CD8-positive, alpha-beta memory T cell (primary cell): ENCODE measurements at regions of chr6 and their contacts with region 1.

Region 1: DNA sequence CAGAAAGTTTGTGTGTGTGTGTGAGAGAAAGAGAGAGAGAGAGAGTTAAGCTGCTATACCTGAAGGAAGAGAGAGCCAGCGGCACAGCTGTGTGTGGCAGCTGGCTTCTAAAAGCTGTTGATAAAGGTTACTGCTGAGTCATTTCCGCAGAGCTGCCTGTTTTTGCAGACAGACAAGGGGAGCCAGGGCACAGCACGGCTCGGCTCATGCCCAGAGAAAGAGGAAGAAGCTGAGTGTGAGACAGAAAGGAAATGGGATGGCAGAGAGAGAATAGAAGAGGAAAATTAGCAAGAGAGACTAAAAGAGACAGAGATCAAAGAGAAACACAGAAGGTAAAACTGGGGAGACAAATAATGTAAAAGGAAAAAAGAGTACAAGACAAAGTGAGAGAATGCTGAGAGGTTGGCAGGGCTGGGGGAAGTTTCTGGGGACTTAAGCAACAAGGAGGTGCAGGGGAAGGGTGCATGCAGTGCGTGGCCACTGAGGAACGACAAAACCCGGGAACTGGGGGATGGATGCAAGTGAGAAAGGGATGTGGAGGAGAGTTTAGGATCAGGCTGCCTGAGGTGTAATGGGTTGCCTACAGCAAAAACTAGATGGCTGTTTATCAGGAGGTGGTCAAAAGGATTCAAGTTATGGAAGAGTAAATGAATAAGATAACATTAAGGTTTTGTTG is 22.7 kb downstream of the HLA-A start:
- DNase-seq: peak; percentile 67 to 89 (median 80)
- H3K4me3 ChIP-seq: peak overlapping the region; percentile 69
- H3K4me3 Mint-ChIP-seq: peak overlapping the region; percentile 85 to 90 (median 87)
- H3K27ac ChIP-seq: peak overlapping the region; percentile 89
- H3K27ac Mint-ChIP-seq: peak overlapping the region; percentile 85 to 98 (median 93)
- H3K4me1 ChIP-seq: peaks cover 32% of the 10 kb centered on the region
- H3K4me1 Mint-ChIP-seq: peaks cover 43 to 50% (median 47%) of the 10 kb centered on the region in 3 donors
- H3K27me3 ChIP-seq: no peaks in the 10 kb centered on the region
- H3K27me3 Mint-ChIP-seq: no peaks in the 10 kb centered on the region

Region 2: DNA sequence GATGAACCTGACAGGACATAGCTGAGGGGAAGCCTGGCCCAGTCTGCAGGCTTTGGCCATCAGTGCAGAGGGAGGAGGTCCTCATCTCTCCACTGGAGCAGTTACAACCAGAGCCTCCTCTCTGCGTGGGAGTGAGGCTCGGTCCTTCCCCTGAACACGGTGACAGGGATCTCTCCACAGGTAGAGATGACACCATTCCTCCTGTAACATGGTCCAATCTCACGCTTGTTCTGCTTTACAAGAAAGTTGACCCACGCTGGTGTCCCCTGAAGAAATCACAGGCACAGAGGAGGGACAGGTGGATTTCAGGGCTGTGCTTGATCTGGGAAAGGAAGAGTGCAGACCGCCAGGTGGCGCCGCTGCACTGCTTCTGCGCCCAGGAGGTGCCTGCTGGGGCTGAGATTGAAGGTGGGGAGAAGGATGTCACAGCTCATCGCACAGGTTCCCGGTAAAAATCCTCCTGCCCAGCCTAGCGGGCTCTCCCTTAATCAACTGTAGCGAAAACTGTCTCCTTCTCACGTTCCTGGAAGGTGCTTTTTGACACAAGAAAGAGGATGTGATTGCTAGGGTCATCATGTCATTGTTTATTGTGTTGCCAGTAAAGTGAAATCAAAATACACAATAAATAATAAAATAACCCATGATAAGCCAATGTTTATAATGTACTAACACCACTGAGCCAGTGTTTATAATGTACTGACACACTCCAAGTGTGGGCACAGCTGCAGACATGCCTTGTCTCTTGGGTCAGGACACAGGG is 117.0 kb before region 1 on chr6:
- CTCF ChIA-PET with region 1: interaction called, 39 read pairs
- POLR2A ChIA-PET with region 1: interaction called, 6 read pairs
- DNase-seq: peak; percentile 71 to 88 (median 79)
- H3K4me3 ChIP-seq: no peak overlapping the region
- H3K4me3 Mint-ChIP-seq: peak overlapping the region in 5 of 7 donors; percentile 15 to 45 (median 37)
- H3K27ac ChIP-seq: no peak overlapping the region
- H3K27ac Mint-ChIP-seq: peak overlapping the region in 1 of 8 donors; percentile 40
- H3K4me1 ChIP-seq: no peaks in the 10 kb centered on the region
- H3K4me1 Mint-ChIP-seq: peaks cover 10 to 18% (median 13%) of the 10 kb centered on the region in 3 donors
- H3K27me3 ChIP-seq: peaks cover 33% of the 10 kb centered on the region
- H3K27me3 Mint-ChIP-seq: peaks cover 52 to 72% of the 10 kb centered on the region in 2 donors

Region 3: GRCh38 chr6:29942275-29943052 is 22.6 kb before region 1 on chr6 and contains the start of gene HLA-A:
- CTCF ChIA-PET with region 1: interaction called, 11 read pairs
- POLR2A ChIA-PET with region 1: interaction called, 36 read pairs
- DNase-seq: peak; percentile 89 to 97 (median 93)
- H3K4me3 ChIP-seq: peak within 1 kb of the TSS; percentile 91
- H3K4me3 Mint-ChIP-seq: peak within 1 kb of the TSS; percentile 87 to 99 (median 97)
- H3K27ac ChIP-seq: peak within 1 kb of the TSS; percentile 94
- H3K27ac Mint-ChIP-seq: peak within 1 kb of the TSS; percentile 98 to 100 (median 100)
- H3K4me1 ChIP-seq: peaks cover 39% of the 10 kb centered on the region
- H3K4me1 Mint-ChIP-seq: peaks cover 53 to 60% (median 55%) of the 10 kb centered on the region in 3 donors
- H3K27me3 ChIP-seq: no peaks in the 10 kb centered on the region
- H3K27me3 Mint-ChIP-seq: peaks cover 0 to 16% of the 10 kb centered on the region in 2 donors
- total RNA-seq, gene HLA-A: 1,371 to 1,390 TPM

Region 4: DNA sequence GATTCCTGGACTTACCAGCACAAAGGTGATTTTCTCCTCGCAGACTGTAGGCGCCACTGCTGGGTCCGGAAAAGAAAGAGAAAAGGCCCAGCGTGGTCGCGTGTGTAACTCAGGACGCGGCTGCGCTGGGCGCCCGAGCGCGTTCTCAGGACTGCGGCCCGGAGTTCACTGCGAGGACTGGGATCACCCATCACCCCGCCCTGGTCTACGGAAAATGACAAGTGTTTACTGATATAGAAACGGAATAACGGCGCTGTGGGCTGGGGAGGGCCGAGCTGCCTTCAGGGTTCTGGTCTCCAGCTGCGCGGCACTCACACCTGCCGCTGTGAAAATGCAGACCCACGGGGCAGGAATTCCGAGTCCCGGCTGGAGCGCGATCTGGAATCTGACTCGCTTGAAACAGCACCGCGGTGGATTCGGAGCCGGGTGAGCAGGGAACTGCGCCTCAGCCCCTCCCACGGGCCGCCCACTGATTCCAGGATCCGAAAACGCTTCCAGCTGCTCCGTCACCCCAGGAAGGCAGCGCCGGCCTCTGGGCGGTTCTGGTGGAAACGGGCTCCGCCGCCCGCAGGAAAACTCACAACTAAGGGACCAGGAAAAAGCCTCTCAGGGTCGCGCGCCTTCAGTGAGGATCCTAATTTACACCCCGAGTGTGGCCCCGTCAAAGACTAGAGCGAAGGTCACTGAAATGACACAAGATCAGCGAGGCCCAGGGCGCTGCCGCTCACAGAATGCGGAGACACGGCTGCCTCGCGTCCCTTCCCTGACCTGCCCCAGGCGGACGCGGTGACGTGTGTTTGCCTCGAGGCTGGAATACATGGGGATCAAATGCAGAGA is 11.8 kb after region 1 on chr6:
- CTCF ChIA-PET with region 1: interaction called, 24 read pairs
- POLR2A ChIA-PET with region 1: interaction called, 5 read pairs
- DNase-seq: peak; percentile 18 to 73 (median 40)
- H3K4me3 ChIP-seq: peak overlapping the region; percentile 58
- H3K4me3 Mint-ChIP-seq: peak overlapping the region; percentile 60 to 96 (median 88)
- H3K27ac ChIP-seq: peak overlapping the region; percentile 47
- H3K27ac Mint-ChIP-seq: peak overlapping the region in 5 of 8 donors; percentile 35 to 88 (median 71)
- H3K4me1 ChIP-seq: peaks cover 28% of the 10 kb centered on the region
- H3K4me1 Mint-ChIP-seq: peaks cover 38 to 41% (median 39%) of the 10 kb centered on the region in 3 donors
- H3K27me3 ChIP-seq: peaks cover 11% of the 10 kb centered on the region
- H3K27me3 Mint-ChIP-seq: peaks cover 50 to 56% of the 10 kb centered on the region in 2 donors

Region 5: DNA sequence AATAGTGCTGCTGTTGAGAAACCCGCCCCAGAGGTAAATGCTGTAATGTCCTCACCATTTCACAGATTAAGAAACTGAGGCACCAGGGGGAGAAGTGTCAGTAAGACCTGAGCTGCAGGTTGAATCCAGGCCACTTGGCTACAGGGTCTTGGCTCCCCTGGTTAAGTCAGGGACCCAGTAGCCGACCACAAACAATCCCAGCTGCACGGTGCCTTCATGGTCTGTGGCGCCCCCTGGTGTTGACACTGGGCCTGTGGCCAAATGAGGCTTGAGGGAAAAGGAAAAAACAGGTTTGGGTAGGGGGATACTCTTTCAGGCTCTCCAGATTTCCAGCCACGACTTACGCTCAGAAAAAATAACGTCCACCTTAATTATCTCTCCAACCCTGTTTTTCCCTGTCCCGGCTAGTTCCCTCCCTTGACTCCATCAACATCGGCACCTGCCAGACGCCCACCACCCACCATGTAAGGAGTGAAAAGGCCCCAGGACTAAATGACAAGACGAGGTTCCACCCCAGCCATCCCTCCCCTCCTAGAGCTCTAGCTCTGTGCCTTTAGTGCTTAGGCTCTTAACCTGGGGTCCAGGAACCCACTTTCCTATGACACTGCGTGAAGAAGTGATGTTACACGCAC is 48.4 kb after region 1 on chr6:
- CTCF ChIA-PET with region 1: interaction called, 10 read pairs
- POLR2A ChIA-PET with region 1: no interaction called
- DNase-seq: peak in 3 of 5 donors; percentile 12 to 44 (median 32)
- H3K4me3 ChIP-seq: no peak overlapping the region
- H3K4me3 Mint-ChIP-seq: no peak overlapping the region
- H3K27ac ChIP-seq: no peak overlapping the region
- H3K27ac Mint-ChIP-seq: no peak overlapping the region
- H3K4me1 ChIP-seq: no peaks in the 10 kb centered on the region
- H3K4me1 Mint-ChIP-seq: peaks cover 0 to 2% (median 0%) of the 10 kb centered on the region in 3 donors
- H3K27me3 ChIP-seq: peaks cover 3% of the 10 kb centered on the region
- H3K27me3 Mint-ChIP-seq: peaks cover 15 to 39% of the 10 kb centered on the region in 2 donors